A549 (cell line): ENCODE measurements at regions of chr15 and their contacts with region 1.

Region 1: DNA sequence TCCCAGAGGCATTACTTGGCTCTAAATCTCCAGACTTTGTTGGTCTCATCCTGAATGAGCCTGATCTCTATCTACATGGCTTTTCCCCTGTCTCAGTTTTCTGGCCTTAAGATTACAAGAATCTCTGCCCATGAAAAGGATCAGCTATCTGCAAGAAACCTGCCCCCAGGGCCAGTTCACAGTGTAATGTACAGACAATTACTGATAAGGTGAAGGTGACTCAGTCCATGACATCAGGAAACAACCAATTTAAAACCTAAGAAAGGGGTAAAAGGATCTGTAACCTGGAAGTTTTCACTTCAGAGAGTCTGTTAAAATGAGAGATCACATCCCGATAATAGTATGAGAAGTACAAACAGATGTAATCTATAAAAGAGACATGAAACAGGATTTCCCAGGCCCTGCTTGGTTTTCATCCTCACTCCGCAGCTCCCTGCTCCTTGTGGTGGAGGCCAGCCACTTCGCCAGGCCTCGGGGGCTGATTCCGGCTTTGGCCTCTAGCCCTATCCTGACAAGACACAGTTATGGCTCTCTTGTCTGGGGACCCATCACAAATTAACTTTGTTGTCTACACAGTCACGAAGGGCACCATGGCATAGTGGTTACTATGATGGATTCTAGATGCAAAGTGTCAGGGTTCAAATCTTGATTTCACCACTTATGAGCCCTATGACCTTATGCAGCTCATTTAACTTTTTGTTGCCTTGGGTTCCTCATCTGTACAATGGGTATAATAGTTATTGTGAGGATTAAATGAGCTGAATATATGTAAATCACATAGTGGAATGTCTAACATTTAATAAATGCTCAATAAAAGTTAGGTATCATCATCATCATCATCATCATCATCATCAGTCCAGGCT is 137.0 kb downstream of the THSD4 start:
- DNase-seq: peak; percentile 85 to 96
- ATAC-seq: peak; percentile 85 to 89
- H3K4me3 ChIP-seq: no peak overlapping the region; the same call in 2 of the 3 replicates
- H3K27ac ChIP-seq: peak overlapping the region; percentile 85 to 86
- H3K4me1 ChIP-seq: peaks cover 58% of the 10 kb centered on the region
- CTCF ChIP-seq: no peak
- EP300 ChIP-seq: peak; percentile 69 to 79; a peak in 4 of 5 replicates
- POLR2A ChIP-seq: no peak
- RAD21 ChIP-seq: peak in 1 of 2 experiments; percentile 33; a peak in 2 of 5 replicates

Region 2: GRCh38 chr15:71079208-71080021 is 172.9 kb before region 1 on chr15:
- CTCF ChIA-PET with region 1: no interaction called
- POLR2A ChIA-PET with region 1: no interaction called
- DNase-seq: peak in 1 of 2 experiments; percentile 49
- ATAC-seq: peak in 1 of 2 experiments; percentile 67; a peak in 4 of 6 replicates
- H3K4me3 ChIP-seq: no peak overlapping the region
- H3K27ac ChIP-seq: no peak overlapping the region
- H3K4me1 ChIP-seq: peaks cover 7% of the 10 kb centered on the region; the same call in 1 of the 3 replicates
- CTCF ChIP-seq: no peak
- EP300 ChIP-seq: no peak
- POLR2A ChIP-seq: no peak
- RAD21 ChIP-seq: no peak

Region 3: GRCh38 chr15:71239592-71240364 is 12.5 kb before region 1 on chr15:
- CTCF ChIA-PET with region 1: interaction called, 14 read pairs
- POLR2A ChIA-PET with region 1: interaction called, 5 read pairs
- DNase-seq: no peak
- ATAC-seq: no peak
- H3K4me3 ChIP-seq: no peak overlapping the region
- H3K27ac ChIP-seq: peak overlapping the region; percentile 56 to 62; a peak in 4 of 6 replicates
- H3K4me1 ChIP-seq: peaks cover 41% of the 10 kb centered on the region
- CTCF ChIP-seq: no peak
- EP300 ChIP-seq: no peak
- POLR2A ChIP-seq: no peak
- RAD21 ChIP-seq: no peak

Region 4: DNA sequence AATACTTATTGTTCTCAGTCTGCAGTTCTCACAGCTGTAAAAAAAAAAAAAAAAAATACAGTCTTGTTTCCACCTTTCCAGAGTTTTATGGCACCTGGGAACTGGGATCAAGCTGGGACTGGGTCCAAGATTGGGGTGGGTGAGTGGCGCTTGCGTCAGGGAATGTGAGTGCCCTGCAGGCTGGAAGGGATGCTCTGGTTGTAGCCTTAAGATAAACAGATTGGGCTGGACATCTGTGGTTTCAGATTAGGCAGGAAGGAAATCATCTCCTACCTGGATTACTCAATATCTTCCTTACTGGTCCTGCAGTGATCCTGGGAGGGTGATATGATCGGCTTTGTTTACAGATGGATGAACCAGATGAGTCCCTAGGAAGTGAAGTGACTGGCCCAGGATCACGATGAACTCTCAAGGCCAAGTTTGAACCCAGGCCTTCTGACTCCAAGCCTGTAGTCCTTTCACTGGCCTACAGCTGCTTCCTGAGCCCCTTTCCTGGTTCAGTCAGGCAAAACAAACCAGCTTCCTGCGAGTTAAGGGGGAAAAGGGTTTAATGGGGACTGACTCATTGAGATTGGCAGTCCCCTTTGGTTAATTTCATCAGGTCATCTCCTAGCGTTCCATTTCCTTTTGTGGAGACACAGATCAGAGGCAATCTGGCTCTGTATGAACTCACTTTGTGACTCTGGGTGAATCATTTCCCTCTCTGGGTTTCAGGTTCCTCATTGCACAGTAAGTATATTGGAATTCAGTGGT is 42.8 kb after region 1 on chr15:
- CTCF ChIA-PET with region 1: interaction called, 8 read pairs
- POLR2A ChIA-PET with region 1: interaction called, 17 read pairs
- DNase-seq: peak; percentile 97 to 99
- ATAC-seq: peak; percentile 90 to 92
- H3K4me3 ChIP-seq: no peak overlapping the region
- H3K27ac ChIP-seq: peak overlapping the region; percentile 96 to 97
- H3K4me1 ChIP-seq: peaks cover 74% of the 10 kb centered on the region
- CTCF ChIP-seq: no peak
- EP300 ChIP-seq: peak; percentile 83 to 87; a peak in 3 of 5 replicates
- POLR2A ChIP-seq: no peak
- RAD21 ChIP-seq: no peak; a peak in 3 of 5 replicates